GM10248 (cell line): ENCODE measurements at regions of chr4 and their contacts with region 1.

Region 1: DNA sequence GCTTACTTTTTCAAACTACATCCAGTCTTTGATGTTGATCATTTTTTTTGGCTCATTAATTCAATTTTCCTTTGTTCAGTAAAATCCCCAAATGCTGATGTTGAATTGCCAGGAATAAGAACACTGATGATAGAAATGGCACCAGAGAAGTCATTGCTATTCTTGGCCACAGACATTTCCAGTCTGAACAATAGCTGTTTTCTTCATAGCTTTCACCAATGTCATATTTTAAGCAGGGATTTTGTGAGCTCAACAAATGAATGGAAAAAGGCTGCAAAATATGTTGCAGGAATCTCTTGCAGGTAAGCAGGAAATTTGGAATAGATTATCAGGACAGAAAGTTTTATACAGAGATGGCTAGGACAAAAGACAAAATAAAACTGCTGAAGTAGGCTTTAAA is 40.5 kb upstream of the GLRB start:
- DNase-seq: no peak
- CTCF ChIP-seq: no peak

Region 2: DNA sequence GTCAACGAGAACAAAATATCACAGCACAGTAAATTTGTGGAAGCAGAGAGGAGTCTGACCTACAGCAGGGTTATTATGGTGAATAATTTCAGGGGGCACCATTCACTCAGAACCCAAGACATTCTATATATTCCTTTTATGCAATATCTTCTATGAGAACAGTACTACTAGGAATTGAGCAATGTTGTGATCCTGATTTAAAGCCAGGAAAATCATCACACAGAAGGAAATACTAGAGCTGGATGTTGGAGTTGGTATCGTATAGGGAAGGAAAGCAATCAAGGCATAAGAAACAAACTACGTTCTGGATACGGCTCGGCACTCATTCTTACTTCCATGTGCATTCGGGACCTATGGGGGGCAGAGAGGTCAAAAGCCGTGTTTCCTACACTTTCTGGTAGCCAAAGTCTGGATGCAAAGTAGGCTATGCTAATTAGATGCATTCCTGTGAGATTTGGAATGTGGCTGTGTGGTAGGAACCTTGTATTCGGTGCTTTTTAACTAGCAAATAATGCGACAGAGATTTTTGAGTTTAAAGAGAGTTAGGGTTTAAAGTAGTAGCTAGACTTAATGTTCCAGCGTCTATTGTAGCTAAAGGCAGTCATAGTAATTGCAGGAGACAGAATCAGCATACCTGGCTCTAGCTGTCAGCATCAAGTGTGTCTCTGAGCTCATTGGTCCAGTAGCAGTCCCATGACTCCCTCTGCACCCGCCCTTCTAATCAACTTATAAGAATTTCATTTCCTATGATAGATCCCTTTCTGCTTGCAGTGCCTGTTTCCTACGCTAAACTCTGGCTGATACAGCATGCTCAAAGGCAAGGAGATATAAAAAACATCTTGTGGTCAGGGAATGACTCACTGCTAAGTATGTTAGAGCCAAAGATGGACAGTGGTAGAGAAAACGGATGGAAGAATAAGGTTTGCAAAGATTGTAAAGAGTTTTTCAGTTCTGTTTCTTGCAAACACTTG is 20.6 kb before region 1 on chr4:
- CTCF ChIA-PET with region 1: no interaction called
- POLR2A ChIA-PET with region 1: no interaction called
- DNase-seq: no peak
- CTCF ChIP-seq: no peak

Region 3: DNA sequence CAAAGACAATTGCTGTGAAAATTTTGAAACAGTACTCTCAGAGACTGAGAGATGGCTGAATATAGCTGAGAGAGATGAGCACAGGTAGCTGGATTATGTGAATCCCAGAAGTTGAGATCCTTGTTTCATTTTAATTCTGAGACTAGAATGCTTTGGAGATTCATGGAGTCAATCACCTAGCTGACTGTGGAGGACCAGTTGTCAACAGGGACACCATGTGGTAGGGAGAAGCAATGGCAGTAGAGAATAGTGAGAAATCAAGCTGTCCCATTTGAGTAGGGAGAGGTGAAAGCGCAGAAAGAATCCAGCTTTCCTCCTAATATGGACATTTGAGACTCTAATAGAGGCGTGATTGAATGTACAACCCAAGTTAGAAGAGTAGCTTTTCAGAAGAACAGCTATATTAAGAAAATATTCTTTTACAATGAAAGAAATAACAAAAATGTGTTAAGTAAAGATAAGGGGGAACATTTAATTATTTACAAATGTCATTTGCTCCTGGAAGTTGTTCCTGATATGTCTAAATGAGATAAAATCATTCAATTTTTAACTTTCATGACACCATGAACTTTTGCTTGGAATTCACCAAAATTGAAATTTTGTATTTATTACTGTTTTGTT is 10.1 kb after region 1 on chr4:
- CTCF ChIA-PET with region 1: interaction called, 16 read pairs
- POLR2A ChIA-PET with region 1: no interaction called
- DNase-seq: peak; percentile 34
- CTCF ChIP-seq: peak; percentile 60